ENCODE measurements at regions of chr17 and their contacts with region 1.

Region 1: DNA sequence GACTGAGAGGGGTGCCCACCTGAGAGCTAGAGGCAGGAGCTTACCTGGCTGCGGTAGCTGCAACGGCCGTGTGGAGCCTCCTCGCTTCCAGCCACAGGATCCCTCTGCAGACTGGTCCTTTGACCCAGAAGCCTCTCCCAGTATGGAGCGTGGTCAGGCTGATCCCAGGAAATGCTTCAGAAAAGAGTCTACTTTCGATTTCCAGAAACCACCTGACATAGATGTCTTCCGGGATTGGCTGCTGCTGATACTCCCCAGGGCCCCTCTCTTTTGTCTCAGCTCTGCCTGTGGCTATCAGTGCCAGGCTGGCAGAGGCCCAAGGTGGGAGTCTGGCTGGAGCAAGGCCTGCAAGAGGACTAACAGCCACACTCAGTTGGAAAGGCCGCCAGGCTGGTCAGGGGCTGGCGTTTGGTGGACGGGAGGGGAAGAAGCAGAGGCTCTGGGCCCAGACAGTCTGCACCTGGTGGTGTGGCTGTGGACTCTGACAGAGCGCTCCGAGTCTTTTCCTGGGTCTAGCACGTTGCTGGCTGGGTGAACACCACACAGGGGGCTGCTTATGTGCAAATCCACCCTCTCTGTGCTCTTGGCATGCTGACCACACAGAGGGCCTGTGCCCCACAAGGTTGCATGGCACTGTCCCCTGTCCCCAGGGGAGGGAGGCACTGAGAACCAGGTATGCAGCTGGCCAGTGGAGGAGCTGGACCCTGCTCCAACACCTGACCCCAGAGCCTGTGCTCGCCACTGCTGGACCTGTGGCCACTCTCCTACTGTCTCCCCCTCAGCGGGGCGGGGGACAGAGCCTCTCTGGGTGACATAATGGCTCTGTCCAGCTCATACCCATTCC is at the start of gene LGALS3BP:
- DNase-seq: peak; percentile 63
- H3K4me3 ChIP-seq: peak within 1 kb of the TSS; percentile 32 to 62 (median 45)
- H3K27ac ChIP-seq: peak within 1 kb of the TSS; percentile 26
- H3K4me1 ChIP-seq: peaks cover 48% of the 10 kb centered on the region
- H3K27me3 ChIP-seq: no peaks in the 10 kb centered on the region
- CTCF ChIP-seq: no peak
- total RNA-seq, gene LGALS3BP: 173 to 221 TPM

Region 2: GRCh38 chr17:78745407-78746088 is 234.5 kb before region 1 on chr17:
- CTCF ChIA-PET with region 1: no interaction called
- dilution Hi-C with region 1: no loop called
- in situ Hi-C with region 1: no loop called
- intact Hi-C with region 1: no loop called
- DNase-seq: no peak
- H3K4me3 ChIP-seq: no peak overlapping the region
- H3K27ac ChIP-seq: no peak overlapping the region
- H3K4me1 ChIP-seq: peaks cover 24% of the 10 kb centered on the region
- H3K27me3 ChIP-seq: no peaks in the 10 kb centered on the region
- CTCF ChIP-seq: peak; percentile 40 to 48

Region 3: GRCh38 chr17:78940708-78941107 is 39.3 kb before region 1 on chr17:
- CTCF ChIA-PET with region 1: no interaction called
- dilution Hi-C with region 1: loop called (anchors 5 kb)
- in situ Hi-C with region 1: no loop called
- intact Hi-C with region 1: no loop called
- DNase-seq: no peak
- H3K4me3 ChIP-seq: no peak overlapping the region
- H3K27ac ChIP-seq: no peak overlapping the region
- H3K4me1 ChIP-seq: no peaks in the 10 kb centered on the region
- H3K27me3 ChIP-seq: peaks cover 4% of the 10 kb centered on the region
- CTCF ChIP-seq: no peak

Region 4: DNA sequence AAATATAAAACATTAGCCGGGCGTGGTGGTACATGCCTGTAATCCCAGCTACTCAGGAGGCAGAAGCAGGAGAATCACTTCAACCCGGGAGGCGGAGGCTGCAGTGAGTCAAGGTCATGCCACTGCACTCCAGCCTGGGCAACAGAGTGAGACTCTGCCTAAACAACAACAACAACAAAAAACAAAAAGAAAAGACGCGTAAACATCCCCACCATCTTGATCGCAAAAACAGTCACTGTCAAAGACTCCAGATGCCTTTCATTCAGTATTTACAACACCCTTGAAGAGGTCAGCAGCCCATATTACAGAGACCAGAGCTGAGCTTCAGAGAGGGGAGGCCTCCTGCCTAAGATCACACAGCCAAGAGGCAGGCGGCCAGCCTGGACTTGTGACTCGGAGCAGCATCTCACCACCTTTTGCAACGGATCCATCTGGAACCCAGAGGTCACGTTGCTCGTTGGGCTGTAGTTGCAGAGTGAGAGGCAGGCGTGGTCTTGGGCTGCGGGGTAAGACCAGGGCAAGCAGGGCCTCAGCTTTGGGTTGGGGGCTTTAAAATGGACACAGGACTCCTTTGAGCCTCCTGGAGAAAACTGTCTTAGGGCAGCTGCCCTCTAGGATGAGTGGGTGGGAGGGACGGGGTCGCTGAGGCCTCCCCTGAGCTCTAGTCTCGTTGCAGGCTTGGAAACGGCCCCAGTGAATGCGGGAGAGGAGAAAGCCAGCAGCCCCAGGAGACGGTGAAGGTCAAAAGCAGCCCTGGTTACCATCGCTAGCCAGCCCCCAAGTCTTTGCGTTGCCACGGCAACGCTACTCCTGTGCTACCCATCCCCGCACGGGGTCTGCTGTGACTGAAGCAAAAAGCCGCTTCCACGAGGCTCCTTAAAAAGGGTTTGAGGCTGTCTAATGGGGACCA is 26.4 kb before region 1 on chr17:
- CTCF ChIA-PET with region 1: no interaction called
- dilution Hi-C with region 1: no loop called
- in situ Hi-C with region 1: no loop called
- intact Hi-C with region 1: no loop called
- DNase-seq: no peak
- H3K4me3 ChIP-seq: no peak overlapping the region
- H3K27ac ChIP-seq: no peak overlapping the region
- H3K4me1 ChIP-seq: no peaks in the 10 kb centered on the region
- H3K27me3 ChIP-seq: peaks cover 2% of the 10 kb centered on the region
- CTCF ChIP-seq: no peak

Region 5: DNA sequence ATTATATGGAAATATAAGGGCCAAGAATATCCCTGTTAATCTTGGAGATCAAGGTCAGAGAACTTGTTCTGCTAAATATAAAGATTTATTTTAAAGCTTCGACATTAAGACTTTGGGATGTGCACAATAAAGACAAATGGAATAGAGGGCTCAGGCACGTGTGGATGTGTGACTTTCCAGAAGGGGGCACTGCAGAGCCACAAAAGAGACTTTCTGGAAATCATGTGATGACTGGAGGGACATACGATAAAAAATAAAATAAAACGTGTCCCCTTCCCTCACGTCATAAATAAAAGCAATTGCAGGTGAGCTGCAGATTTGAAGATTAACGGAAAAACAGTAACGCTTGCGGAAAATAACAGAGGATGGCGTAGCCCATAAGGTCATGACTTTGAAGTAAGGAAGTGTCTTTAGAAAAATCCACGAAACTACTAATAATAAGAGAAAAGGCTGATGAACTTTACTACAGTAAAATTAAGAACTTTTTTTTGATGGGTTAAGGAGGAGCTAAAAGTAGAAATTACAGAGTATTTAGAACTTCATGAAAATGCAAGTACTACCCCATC is 85.2 kb after region 1 on chr17:
- CTCF ChIA-PET with region 1: no interaction called
- dilution Hi-C with region 1: no loop called
- in situ Hi-C with region 1: no loop called
- intact Hi-C with region 1: no loop called
- DNase-seq: no peak
- H3K4me3 ChIP-seq: no peak overlapping the region
- H3K27ac ChIP-seq: no peak overlapping the region
- H3K4me1 ChIP-seq: no peaks in the 10 kb centered on the region
- H3K27me3 ChIP-seq: no peaks in the 10 kb centered on the region
- CTCF ChIP-seq: peak; percentile 39 to 52